Heart right ventricle (tissue), 16 donors: ENCODE measurements at regions of chr17 and their contacts with region 1.

Region 1: DNA sequence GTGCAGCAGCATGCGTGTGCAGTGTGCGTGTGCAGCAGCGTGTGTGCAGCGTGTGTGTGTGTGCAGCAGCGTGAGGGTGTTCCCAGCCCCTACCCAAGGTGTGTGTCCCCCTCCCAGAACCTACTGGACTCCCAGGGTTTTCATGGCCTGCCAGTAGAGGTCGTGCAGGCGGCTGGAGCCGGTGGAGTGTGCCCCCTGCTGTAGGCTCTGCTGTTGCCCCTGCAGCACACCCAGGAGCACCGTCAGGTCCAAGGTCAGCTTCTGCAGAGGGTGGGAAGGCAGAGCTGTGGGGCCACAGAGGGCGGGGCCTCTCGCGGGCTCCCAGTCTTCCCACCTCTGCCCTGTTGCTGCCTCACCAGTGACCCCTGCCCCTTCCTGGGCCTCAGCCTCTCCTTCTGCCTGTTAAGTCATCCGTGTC is 15.0 kb downstream of the MYBBP1A start:
- DNase-seq: peak in 1 of 2 donors; percentile 21
- ATAC-seq: no peak
- H3K4me3 ChIP-seq: no peak overlapping the region
- H3K27ac ChIP-seq: peak overlapping the region in 8 of 10 donors; percentile 35 to 83 (median 73)
- H3K4me1 ChIP-seq: peaks cover 25 to 69% (median 51%) of the 10 kb centered on the region in 9 donors
- H3K27me3 ChIP-seq: no peaks in the 10 kb centered on the region
- CTCF ChIP-seq: peak in 5 of 9 donors; percentile 15 to 41 (median 27)

Region 2: GRCh38 chr17:4509401-4509800 is 30.8 kb before region 1 on chr17:
- intact Hi-C with region 1: loop called in 1 of 10 experiments (anchors 5 kb)
- DNase-seq: no peak
- ATAC-seq: peak in 7 of 8 donors; percentile 34 to 49 (median 37)
- H3K4me3 ChIP-seq: no peak overlapping the region
- H3K27ac ChIP-seq: peak overlapping the region; percentile 38 to 87 (median 75)
- H3K4me1 ChIP-seq: peaks cover 18 to 94% (median 73%) of the 10 kb centered on the region in 9 donors
- H3K27me3 ChIP-seq: no peaks in the 10 kb centered on the region
- CTCF ChIP-seq: peak in 1 of 9 donors; percentile 8